A673 (cell line): ENCODE measurements at regions of chr5 and their contacts with region 1.

Region 1: DNA sequence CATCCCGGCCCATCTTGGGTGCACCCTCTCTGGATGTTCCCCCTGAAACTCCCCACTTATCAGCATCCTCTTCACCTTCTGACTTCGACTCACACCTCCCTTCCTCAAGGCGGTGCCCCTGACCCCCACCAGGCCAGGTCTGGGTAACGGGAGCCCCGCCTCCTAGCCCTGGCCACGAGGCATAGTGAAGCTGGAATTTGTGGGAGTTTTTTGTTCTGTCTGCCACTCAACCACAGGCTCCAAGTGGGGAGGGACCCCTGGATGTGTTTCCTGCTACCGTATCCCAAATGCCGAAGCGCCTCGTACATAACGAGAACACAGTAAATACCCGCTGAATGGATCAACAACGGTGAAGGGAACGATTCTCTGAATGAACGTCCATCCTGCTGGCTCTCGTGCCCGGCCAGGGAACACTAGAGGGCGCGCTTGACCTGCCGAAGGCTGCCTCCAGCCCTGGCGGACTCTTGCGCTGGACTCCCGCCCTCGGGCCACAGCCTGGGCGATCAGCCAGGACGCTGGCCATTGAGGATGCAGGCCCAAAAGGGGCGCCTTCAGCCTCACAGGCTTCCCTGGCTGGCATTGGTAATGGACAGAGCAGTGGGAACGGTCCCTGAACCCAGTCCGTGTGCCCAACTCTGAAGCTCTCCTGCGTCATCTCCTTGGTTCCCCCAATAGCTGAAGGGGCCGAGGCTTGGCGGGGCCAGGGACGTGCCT is 47.3 kb upstream of the PHYKPL start:
- DNase-seq: peak; percentile 52
- H3K4me3 ChIP-seq: no peak overlapping the region
- H3K27ac ChIP-seq: no peak overlapping the region
- H3K4me1 ChIP-seq: no peaks in the 10 kb centered on the region
- H3K27me3 ChIP-seq: no peaks in the 10 kb centered on the region
- CTCF ChIP-seq: peak; percentile 90

Region 2: GRCh38 chr5:177454397-177455035 is 825.4 kb before region 1 on chr5:
- CTCF ChIA-PET with region 1: no interaction called
- POLR2A ChIA-PET with region 1: no interaction called
- intact Hi-C with region 1: no loop called
- DNase-seq: peak; percentile 88
- H3K4me3 ChIP-seq: peak overlapping the region; percentile 62
- H3K27ac ChIP-seq: peak overlapping the region; percentile 81
- H3K4me1 ChIP-seq: peaks cover 13% of the 10 kb centered on the region
- H3K27me3 ChIP-seq: no peaks in the 10 kb centered on the region
- CTCF ChIP-seq: peak; percentile 60

Region 3: GRCh38 chr5:178551059-178551458 is 271.2 kb after region 1 on chr5:
- CTCF ChIA-PET with region 1: interaction called, 3 read pairs
- POLR2A ChIA-PET with region 1: no interaction called
- intact Hi-C with region 1: loop called (anchors 1 kb)
- DNase-seq: peak; percentile 8
- H3K4me3 ChIP-seq: no peak overlapping the region
- H3K27ac ChIP-seq: no peak overlapping the region
- H3K4me1 ChIP-seq: no peaks in the 10 kb centered on the region
- H3K27me3 ChIP-seq: no peaks in the 10 kb centered on the region
- CTCF ChIP-seq: peak; percentile 52; the same call in 1 of the 2 replicates

Region 4: GRCh38 chr5:178590141-178590923 is 310.4 kb after region 1 on chr5 and contains the start of gene COL23A1:
- CTCF ChIA-PET with region 1: interaction called, 7 read pairs
- POLR2A ChIA-PET with region 1: no interaction called
- intact Hi-C with region 1: loop called (anchors 2 kb)
- DNase-seq: peak; percentile 61
- H3K4me3 ChIP-seq: peak within 1 kb of the TSS; percentile 51
- H3K27ac ChIP-seq: no peak within 1 kb of the TSS
- H3K4me1 ChIP-seq: peaks cover 13% of the 10 kb centered on the region
- H3K27me3 ChIP-seq: no peaks in the 10 kb centered on the region
- CTCF ChIP-seq: peak; percentile 85
- total RNA-seq, gene COL23A1: 0.42 TPM in 1 of 2 replicates, not detected in the other